ENCODE measurements at regions of chr2 and their contacts with region 1.

Region 1: GRCh38 chr2:176126929-176127773 is 2.4 kb upstream of the HOXD8 start:
- DNase-seq: peak; percentile 29
- H3K4me3 ChIP-seq: no peak overlapping the region
- H3K27ac ChIP-seq: no peak overlapping the region
- H3K27me3 ChIP-seq: peaks cover 84% of the 10 kb centered on the region
- CTCF ChIP-seq: peak; percentile 83

Region 2: DNA sequence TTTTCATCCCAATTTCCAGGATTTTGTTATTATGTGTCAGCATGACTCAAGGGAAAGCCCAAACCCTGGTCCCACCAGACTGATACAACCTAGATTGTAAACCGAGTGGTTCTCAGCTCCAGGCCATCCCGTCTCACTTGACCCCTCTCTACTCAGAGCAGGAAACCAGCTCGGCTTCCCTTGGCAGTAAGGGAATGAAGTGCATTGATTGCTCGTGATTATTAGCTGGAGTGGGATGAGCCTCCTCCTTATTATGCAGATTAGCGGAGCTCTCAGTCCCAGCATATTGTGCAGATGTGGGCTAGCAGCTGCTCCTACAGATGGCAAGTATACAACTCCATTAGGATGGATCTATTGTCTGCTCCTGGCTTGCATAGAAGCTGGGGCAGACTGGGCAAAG is 292.7 kb before region 1 on chr2:
- CTCF ChIA-PET with region 1: no interaction called
- POLR2A ChIA-PET with region 1: no interaction called
- DNase-seq: no peak
- H3K4me3 ChIP-seq: no peak overlapping the region
- H3K27ac ChIP-seq: no peak overlapping the region
- H3K27me3 ChIP-seq: no peaks in the 10 kb centered on the region
- CTCF ChIP-seq: no peak

Region 3: GRCh38 chr2:176110975-176111663 is 16.0 kb before region 1 on chr2:
- CTCF ChIA-PET with region 1: interaction called, 16 read pairs
- POLR2A ChIA-PET with region 1: no interaction called
- DNase-seq: no peak
- H3K4me3 ChIP-seq: no peak overlapping the region
- H3K27ac ChIP-seq: no peak overlapping the region
- H3K27me3 ChIP-seq: peaks cover 89% of the 10 kb centered on the region
- CTCF ChIP-seq: peak; percentile 67

Region 4: DNA sequence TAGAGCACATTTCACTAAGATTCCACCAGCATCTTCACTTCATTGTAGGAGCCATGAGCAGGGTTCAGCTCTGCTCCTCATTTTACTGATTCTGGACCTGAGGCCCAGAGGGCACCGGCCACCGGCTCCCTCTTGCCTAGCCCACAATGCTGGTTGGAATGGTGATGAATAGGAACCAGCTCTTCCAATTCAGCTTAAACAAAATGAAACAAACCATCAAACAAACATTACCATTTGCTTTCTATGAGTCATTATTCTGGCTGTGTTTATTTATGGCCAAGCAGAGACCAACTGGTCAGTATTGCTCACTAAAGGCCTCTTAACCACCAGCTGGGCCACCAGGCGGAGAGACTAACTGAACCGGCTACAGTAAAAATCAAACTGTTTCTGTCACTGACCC is 318.8 kb after region 1 on chr2:
- CTCF ChIA-PET with region 1: interaction called, 16 read pairs
- POLR2A ChIA-PET with region 1: no interaction called
- DNase-seq: peak; percentile 44
- H3K4me3 ChIP-seq: no peak overlapping the region
- H3K27ac ChIP-seq: no peak overlapping the region
- H3K27me3 ChIP-seq: no peaks in the 10 kb centered on the region
- CTCF ChIP-seq: peak; percentile 30

Region 5: DNA sequence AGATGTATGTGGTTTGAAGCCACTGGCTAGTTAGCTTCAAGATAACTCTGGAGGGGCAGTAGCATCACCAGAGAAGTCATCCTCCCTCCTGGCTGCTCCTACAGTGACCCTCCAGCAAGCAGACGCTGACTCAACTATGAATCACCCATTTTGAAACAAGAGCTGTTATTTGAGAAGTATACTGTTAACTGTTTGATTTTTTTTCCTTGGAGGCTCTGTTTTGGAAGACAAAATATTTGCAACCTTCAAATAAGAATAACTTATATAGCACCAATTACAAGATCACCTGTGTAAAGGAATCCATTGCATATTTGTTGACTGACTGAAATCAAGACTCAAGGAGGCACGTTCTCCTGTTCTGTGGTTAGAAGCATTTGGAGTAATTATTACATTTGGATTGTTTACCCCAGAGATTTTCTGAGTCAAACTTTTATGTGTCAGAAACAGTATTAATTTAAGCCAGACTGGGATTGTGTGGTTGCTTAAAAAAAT is 455.9 kb after region 1 on chr2:
- CTCF ChIA-PET with region 1: interaction called, 12 read pairs
- POLR2A ChIA-PET with region 1: no interaction called
- DNase-seq: peak; percentile 74
- H3K4me3 ChIP-seq: no peak overlapping the region
- H3K27ac ChIP-seq: no peak overlapping the region
- H3K27me3 ChIP-seq: no peaks in the 10 kb centered on the region
- CTCF ChIP-seq: no peak

Region 6: DNA sequence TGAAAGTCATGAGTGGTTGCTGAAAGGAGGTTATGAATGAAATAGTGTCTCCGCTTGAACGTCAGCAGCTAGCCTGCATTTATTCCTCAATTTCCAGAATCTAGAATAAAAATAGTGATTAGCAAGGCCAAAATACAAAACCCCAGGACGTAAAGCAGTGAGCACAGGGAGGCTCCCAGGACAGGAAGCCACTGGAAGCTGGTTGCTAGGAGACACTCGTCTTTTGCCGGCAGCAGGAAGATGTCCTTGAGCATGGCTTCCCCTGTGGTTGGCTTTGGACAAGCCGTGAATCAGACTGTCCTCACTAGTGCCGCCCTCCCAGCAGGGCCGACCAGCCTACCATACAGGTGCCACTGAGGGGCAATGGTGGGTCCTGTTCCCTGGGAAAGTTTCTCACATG is 516.5 kb after region 1 on chr2:
- CTCF ChIA-PET with region 1: interaction called, 97 read pairs
- POLR2A ChIA-PET with region 1: interaction called, 5 read pairs
- DNase-seq: no peak
- H3K4me3 ChIP-seq: no peak overlapping the region
- H3K27ac ChIP-seq: no peak overlapping the region
- H3K27me3 ChIP-seq: no peaks in the 10 kb centered on the region
- CTCF ChIP-seq: no peak

Region 7: DNA sequence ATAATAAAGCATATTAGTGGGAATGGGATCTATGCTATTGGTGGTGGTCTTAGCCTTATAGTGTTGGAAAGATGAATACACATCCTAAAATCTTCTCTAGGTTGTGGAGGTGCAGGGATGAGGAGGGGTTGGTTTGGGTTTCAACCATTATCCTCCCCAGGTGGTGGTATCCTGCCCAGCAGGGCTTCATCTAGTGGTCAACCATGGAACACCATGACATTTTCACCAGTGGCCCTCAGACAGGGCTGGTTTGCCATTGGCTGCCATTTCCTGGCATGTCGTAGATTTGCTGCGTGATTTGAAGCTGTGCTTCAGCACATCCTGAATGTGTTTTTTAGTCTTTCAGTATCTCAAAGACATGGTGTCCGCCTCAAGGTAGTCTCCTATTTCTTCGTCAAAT is 694.2 kb after region 1 on chr2:
- CTCF ChIA-PET with region 1: interaction called, 10 read pairs
- POLR2A ChIA-PET with region 1: no interaction called
- DNase-seq: no peak
- H3K4me3 ChIP-seq: no peak overlapping the region
- H3K27ac ChIP-seq: no peak overlapping the region
- H3K27me3 ChIP-seq: peaks cover 3% of the 10 kb centered on the region
- CTCF ChIP-seq: no peak